OCI-LY7 (cell line): ENCODE measurements at regions of chr7 and their contacts with region 1.

Region 1: GRCh38 chr7:78301407-78301806 is 502.8 kb downstream of the PHTF2 start:
- DNase-seq: no peak
- H3K4me3 ChIP-seq: no peak overlapping the region
- H3K27ac ChIP-seq: no peak overlapping the region
- H3K4me1 ChIP-seq: peaks cover 34% of the 10 kb centered on the region
- CTCF ChIP-seq: no peak

Region 2: GRCh38 chr7:78254726-78255055 is 46.7 kb before region 1 on chr7:
- CTCF ChIA-PET with region 1: no interaction called
- POLR2A ChIA-PET with region 1: no interaction called
- intact Hi-C with region 1: loop called (anchors 2 kb)
- DNase-seq: peak; percentile 92
- H3K4me3 ChIP-seq: peak overlapping the region; percentile 16
- H3K27ac ChIP-seq: peak overlapping the region; percentile 88
- H3K4me1 ChIP-seq: peaks cover 72% of the 10 kb centered on the region
- CTCF ChIP-seq: no peak

Region 3: DNA sequence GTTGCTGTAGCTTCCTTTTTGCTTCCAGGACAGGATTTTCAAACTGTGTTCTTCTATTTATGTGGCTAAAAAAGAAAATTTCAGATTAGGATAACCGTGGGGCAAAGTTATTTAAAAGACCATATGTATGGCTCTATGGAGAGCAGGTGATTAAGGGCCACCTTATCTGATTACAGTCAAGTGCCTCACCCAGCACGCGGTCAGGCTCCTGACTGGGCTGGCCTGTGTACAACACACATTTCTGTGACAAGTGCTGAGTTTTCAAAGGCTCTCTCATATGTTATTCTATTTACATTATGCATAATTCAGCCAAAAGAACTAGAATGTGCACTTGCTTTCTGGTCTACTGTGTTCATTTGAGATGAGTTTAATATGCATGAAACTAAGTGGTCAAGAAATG is 44.6 kb after region 1 on chr7:
- CTCF ChIA-PET with region 1: no interaction called
- POLR2A ChIA-PET with region 1: no interaction called
- intact Hi-C with region 1: no loop called
- DNase-seq: no peak
- H3K4me3 ChIP-seq: no peak overlapping the region
- H3K27ac ChIP-seq: no peak overlapping the region
- H3K4me1 ChIP-seq: no peaks in the 10 kb centered on the region
- CTCF ChIP-seq: no peak